CD14-positive monocyte (primary cell): ENCODE measurements at regions of chr19 and their contacts with region 1.

Region 1: DNA sequence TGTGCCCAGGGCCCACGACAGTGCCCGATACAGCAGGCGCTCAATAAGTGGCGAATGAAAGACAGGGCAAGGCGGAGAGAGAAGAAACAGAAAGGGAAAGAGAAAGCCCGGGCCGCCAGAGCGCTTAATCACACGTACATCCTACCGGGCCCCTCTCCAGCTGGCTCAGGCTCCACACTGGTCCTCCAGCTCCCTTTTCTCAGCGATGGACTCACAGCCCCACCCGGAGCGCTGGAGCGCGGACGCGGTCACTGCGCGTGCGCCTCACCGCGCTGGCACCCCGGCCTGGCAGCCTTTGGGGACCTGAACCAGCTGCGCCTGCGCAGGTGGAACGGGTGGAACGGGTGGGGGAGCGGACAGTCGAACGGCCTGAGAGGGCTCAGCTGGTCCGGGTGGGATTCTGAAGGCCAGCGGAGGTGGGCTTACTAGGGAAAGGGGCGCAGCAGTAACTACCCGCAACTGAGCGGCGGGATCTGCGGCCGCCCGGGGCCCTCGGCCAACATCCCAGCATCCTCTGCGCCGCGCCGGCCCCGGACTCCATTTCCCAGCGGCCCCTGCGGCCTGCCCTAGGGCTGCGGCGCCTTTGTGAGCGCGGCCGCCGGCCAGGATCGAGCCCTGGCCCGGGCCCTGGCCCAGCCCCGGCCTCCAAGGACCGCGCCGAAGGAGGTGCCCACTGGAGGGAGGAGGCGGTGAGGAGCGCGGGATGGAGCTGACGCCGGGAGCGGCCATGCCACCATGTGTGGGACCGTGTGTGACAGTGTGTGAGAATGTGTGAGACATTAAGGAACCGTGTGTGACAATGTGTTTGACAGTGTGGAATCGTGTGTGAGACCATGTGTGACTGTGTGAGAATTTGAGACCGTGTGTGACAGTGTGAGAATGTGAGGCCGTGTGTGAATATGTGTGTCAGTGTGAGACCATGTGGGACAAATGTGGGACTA is at the start of gene ZNF583:
- DNase-seq: peak; percentile 88 to 92 (median 91)
- H3K4me3 ChIP-seq: peak within 1 kb of the TSS; percentile 74 to 90 (median 80)
- H3K4me3 Mint-ChIP-seq: peak within 1 kb of the TSS; percentile 91 to 94
- H3K27ac ChIP-seq: peak within 1 kb of the TSS; percentile 69 to 91
- H3K27ac Mint-ChIP-seq: peak within 1 kb of the TSS; percentile 86 to 98 (median 94)
- H3K4me1 ChIP-seq: peaks cover 15 to 18% of the 10 kb centered on the region in 2 donors
- H3K4me1 Mint-ChIP-seq: peaks cover 19% of the 10 kb centered on the region
- H3K27me3 ChIP-seq: no peaks in the 10 kb centered on the region
- H3K27me3 Mint-ChIP-seq: peaks cover 0 to 5% (median 0%) of the 10 kb centered on the region in 3 donors
- CTCF ChIP-seq: no peak
- polyA plus RNA-seq, gene ZNF583: 1.3 to 6.6 (median 4.0) TPM

Region 2: DNA sequence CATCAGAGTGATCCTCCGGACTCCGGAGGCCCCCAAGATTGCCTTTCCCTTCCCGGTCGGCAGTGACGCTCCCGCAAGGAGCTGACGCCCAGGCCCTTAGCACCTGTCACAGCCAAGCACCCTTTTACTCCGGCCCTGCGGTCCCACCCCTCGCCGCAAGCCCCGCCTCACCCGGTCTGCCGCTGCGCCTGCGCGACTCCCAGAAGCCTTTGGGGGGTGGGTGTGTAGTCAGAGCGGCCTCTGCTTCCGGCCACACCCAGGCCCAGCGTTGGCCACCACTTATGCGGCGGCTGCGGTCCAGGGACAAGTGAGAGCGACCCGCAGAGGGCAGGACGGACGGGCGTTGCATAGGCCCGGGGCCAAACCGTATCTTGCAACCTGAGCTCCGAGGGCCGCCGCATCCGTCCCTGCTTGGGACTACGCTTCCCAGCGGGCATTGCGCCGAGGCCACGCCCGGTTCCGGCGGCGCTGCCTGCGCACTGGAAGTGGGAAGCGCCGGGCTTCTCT is 134.3 kb after region 1 on chr19:
- intact Hi-C with region 1: loop called in 1 of 2 experiments (anchors 10 kb)
- DNase-seq: peak; percentile 77 to 86 (median 79)
- H3K4me3 ChIP-seq: peak overlapping the region; percentile 68 to 95 (median 84)
- H3K4me3 Mint-ChIP-seq: peak overlapping the region; percentile 84 to 91
- H3K27ac ChIP-seq: peak overlapping the region; percentile 76 to 85
- H3K27ac Mint-ChIP-seq: peak overlapping the region; percentile 79 to 95 (median 91)
- H3K4me1 ChIP-seq: peaks cover 14 to 17% of the 10 kb centered on the region in 2 donors
- H3K4me1 Mint-ChIP-seq: peaks cover 15% of the 10 kb centered on the region
- H3K27me3 ChIP-seq: no peaks in the 10 kb centered on the region
- H3K27me3 Mint-ChIP-seq: peaks cover 0 to 5% (median 0%) of the 10 kb centered on the region in 3 donors
- CTCF ChIP-seq: no peak

Region 3: GRCh38 chr19:56567274-56568120 is 163.5 kb after region 1 on chr19 and contains the start of gene ZNF470:
- intact Hi-C with region 1: loop called (anchors 10 kb)
- DNase-seq: peak; percentile 86 to 89 (median 88)
- H3K4me3 ChIP-seq: peak within 1 kb of the TSS; percentile 63 to 99 (median 88)
- H3K4me3 Mint-ChIP-seq: peak within 1 kb of the TSS; percentile 93 to 99
- H3K27ac ChIP-seq: peak within 1 kb of the TSS; percentile 46 to 81
- H3K27ac Mint-ChIP-seq: peak within 1 kb of the TSS; percentile 72 to 94 (median 86)
- H3K4me1 ChIP-seq: peaks cover 11 to 15% of the 10 kb centered on the region in 2 donors
- H3K4me1 Mint-ChIP-seq: peaks cover 11% of the 10 kb centered on the region
- H3K27me3 ChIP-seq: no peaks in the 10 kb centered on the region
- H3K27me3 Mint-ChIP-seq: peaks cover 0 to 3% (median 1%) of the 10 kb centered on the region in 3 donors
- CTCF ChIP-seq: no peak
- polyA plus RNA-seq, gene ZNF470: 0.31 to 0.81 (median 0.40) TPM